ENCODE measurements at regions of chr4 and their contacts with region 1.

Region 1: DNA sequence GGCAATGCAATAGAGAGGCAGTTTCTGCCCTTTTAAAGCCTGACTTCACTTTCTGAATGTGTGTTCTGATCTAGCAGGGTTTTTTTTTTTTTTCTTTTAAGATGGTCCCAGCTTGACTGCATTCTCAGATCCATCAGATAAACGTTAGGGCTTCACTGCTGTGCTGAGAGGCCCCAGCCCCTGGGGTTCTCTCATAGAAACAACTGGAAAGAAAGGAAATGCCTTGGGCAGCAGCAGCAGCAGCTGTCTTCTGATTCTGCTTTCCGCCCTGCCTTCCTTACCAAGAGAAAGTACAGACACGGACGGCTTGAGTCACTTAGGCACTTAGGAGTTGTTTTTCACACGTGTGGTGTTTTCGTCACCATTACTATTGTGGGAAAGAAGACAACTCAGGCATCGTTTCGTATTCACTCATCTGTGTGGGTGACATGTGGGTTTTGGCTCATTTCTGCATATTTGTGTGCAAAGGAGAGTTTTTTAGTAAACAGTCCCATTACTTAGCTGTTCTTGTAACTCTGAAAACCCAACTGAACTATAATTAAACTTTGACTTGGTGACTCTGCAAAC is 172.0 kb downstream of the PTTG2 start:
- DNase-seq: peak; percentile 89
- H3K4me3 Mint-ChIP-seq: no peak overlapping the region
- H3K27ac Mint-ChIP-seq: peak overlapping the region; percentile 94
- H3K4me1 Mint-ChIP-seq: peaks cover 62% of the 10 kb centered on the region
- H3K27me3 Mint-ChIP-seq: no peaks in the 10 kb centered on the region

Region 2: DNA sequence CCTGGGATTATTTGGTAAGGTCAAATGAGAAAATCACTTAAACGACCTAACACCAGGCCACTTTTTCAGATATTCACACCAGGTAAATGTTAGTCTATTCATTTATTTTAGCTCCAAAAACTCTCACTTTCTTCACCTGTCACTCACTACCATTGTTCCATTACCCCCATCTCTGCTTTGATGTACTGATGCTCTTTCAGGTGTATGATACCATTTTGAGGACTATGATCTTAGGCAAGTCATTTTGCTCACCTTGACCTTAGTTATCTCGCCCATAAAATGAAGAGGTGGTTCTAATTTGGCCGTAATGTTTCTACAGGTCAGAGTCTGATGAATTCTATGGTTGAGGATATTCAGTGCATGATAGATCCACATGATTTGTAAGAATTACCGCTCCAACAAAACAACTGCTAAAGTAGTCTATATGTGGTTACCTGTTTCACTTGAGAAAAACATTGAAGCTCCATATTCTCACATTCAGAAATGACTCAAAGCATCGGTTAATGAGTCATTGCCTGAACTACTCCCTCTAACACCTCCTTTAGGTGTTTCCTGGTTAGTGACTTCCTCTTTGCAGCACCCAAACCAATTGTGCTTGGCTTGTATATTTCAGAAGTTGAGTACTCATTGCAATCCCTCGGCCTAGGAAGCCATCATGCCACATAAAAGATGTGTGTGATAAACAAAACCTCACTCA is 1846.3 kb before region 1 on chr4:
- CTCF ChIA-PET with region 1: no interaction called
- intact Hi-C with region 1: loop called (anchors 1 kb)
- DNase-seq: peak; percentile 79
- H3K4me3 Mint-ChIP-seq: peak overlapping the region; percentile 22
- H3K27ac Mint-ChIP-seq: peak overlapping the region; percentile 85
- H3K4me1 Mint-ChIP-seq: peaks cover 32% of the 10 kb centered on the region
- H3K27me3 Mint-ChIP-seq: no peaks in the 10 kb centered on the region

Region 3: GRCh38 chr4:37816006-37816405 is 316.2 kb before region 1 on chr4:
- CTCF ChIA-PET with region 1: no interaction called
- intact Hi-C with region 1: loop called (anchors 2 kb)
- DNase-seq: peak; percentile 31
- H3K4me3 Mint-ChIP-seq: peak overlapping the region; percentile 30
- H3K27ac Mint-ChIP-seq: peak overlapping the region; percentile 76
- H3K4me1 Mint-ChIP-seq: peaks cover 15% of the 10 kb centered on the region
- H3K27me3 Mint-ChIP-seq: no peaks in the 10 kb centered on the region

Region 4: DNA sequence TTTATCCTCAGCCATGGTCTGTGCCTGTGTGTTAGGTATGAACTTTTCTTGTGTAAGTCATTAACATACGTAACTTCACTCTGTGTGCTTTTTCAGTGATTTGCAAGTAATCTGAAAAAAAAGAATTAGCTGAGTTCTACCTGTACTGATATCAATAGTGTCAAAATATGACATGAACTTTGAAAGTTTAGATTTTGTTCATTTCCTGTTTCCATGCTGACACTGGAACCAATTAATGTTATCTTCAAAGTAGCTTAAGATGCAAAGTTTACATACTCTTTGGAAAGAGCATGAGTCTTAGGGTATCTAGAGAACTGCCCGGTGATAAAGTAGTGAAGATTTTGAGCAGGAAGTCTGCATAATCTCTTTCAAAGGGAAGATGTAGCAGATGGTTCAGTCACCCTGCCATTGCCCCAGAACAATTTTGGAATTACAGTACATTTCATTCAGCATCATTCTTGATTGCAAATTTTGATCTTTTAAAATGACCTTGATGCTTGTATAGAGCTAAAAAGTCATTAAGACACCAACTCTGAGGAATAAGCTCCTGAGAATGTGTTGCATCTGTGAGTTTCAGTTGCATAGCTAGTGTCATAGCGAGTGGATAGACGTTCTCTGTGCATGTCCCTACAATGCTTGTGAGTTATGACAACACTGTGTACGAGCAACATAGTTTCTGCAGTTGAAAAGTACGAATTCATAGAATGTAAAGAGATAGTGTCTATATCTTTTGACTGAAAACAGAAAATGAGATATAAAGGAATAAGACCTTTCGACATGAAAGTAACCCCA is 41.5 kb before region 1 on chr4:
- CTCF ChIA-PET with region 1: interaction called, 7 read pairs
- intact Hi-C with region 1: loop called (anchors 1 kb)
- DNase-seq: no peak
- H3K4me3 Mint-ChIP-seq: no peak overlapping the region
- H3K27ac Mint-ChIP-seq: peak overlapping the region; percentile 77
- H3K4me1 Mint-ChIP-seq: peaks cover 23% of the 10 kb centered on the region
- H3K27me3 Mint-ChIP-seq: no peaks in the 10 kb centered on the region

Region 5: DNA sequence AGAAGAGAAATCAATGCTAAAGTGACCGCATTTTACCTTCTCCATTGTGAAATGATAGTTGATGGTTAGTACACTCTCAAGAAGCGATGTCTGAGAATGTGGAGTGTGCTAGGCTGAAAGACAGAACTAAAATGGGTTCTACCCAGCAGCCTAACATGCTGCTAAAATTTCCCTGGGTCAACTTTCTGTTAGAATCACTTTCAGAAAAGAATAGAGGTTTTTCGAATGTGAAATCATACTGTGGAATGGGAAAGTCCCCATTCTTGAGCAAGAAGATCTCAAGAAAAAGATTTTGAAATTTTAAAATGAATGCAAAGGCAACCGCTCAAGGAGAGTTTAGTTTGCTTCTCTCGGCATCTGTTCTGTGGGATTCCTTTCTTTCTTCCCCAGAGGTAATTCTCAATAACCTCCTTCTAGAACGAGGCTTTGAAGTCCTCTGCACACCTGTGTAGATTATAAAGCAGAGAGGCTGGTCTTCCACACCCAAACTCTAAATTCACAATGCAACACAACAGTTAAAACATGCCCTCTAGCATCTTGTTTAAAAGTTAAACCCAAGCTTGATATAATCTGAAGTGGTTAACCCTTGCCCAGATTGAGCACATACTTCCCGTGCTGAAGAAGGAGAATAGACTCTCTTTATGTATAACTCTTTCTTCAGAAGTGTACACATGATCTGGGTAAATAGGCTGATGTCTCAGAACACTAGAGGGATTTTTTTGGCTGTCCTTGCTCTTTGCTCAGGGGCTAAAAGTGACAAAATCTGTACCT is 323.1 kb after region 1 on chr4:
- CTCF ChIA-PET with region 1: no interaction called
- intact Hi-C with region 1: loop called (anchors 1 kb)
- DNase-seq: peak; percentile 11
- H3K4me3 Mint-ChIP-seq: no peak overlapping the region
- H3K27ac Mint-ChIP-seq: peak overlapping the region; percentile 82
- H3K4me1 Mint-ChIP-seq: peaks cover 52% of the 10 kb centered on the region
- H3K27me3 Mint-ChIP-seq: no peaks in the 10 kb centered on the region

Region 6: GRCh38 chr4:38815885-38816782 is 683.9 kb after region 1 on chr4:
- CTCF ChIA-PET with region 1: no interaction called
- intact Hi-C with region 1: loop called (anchors 1 kb)
- DNase-seq: no peak
- H3K4me3 Mint-ChIP-seq: no peak overlapping the region
- H3K27ac Mint-ChIP-seq: peak overlapping the region; percentile 29
- H3K4me1 Mint-ChIP-seq: peaks cover 25% of the 10 kb centered on the region
- H3K27me3 Mint-ChIP-seq: no peaks in the 10 kb centered on the region

Region 7: GRCh38 chr4:39353478-39354253 is 1221.5 kb after region 1 on chr4:
- CTCF ChIA-PET with region 1: no interaction called
- intact Hi-C with region 1: loop called (anchors 1 kb)
- DNase-seq: peak; percentile 44
- H3K4me3 Mint-ChIP-seq: peak overlapping the region; percentile 55
- H3K27ac Mint-ChIP-seq: peak overlapping the region; percentile 95
- H3K4me1 Mint-ChIP-seq: peaks cover 83% of the 10 kb centered on the region
- H3K27me3 Mint-ChIP-seq: no peaks in the 10 kb centered on the region